Activated naive CD4-positive, alpha-beta T cell treated with anti-CD3 and anti-CD28 coated beads, Interleukin-2, amount 10 ng/mL, durations not matched to agents 7 days and 5 days (primary cell): ENCODE measurements at regions of chr1 and their contacts with region 1.

Region 1: GRCh38 chr1:16078925-16079656 is 5.6 kb upstream of the FAM131C start:
- DNase-seq: peak; percentile 85
- H3K4me3 Mint-ChIP-seq: peak overlapping the region; percentile 50
- H3K27ac Mint-ChIP-seq: peak overlapping the region; percentile 65
- H3K4me1 Mint-ChIP-seq: peaks cover 13% of the 10 kb centered on the region
- H3K27me3 Mint-ChIP-seq: peaks cover 37% of the 10 kb centered on the region

Region 2: DNA sequence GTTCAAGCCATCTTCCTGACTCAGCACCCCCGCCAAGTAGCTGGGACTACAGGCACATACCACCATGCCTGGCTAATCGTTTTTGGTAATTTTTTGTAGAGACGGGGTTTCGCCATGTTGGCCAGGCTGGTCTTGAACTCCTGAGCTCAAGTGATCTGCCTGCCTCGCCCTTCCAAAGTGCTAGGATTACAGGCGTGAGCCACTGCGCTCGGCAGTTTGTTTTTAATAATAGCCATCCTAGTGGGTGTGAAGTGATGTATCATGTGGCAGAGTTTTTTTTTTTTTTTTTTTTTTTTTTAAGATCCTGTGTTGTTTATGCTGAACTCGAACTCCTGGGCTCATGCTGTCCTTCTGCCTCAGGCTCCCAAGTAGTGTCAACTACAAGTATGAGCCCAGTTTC is 179.8 kb before region 1 on chr1:
- CTCF ChIA-PET with region 1: no interaction called
- DNase-seq: no peak
- H3K4me3 Mint-ChIP-seq: no peak overlapping the region
- H3K27ac Mint-ChIP-seq: no peak overlapping the region
- H3K4me1 Mint-ChIP-seq: peaks cover 7% of the 10 kb centered on the region
- H3K27me3 Mint-ChIP-seq: no peaks in the 10 kb centered on the region

Region 3: GRCh38 chr1:15985611-15986297 is 93.3 kb before region 1 on chr1:
- CTCF ChIA-PET with region 1: no interaction called
- DNase-seq: no peak
- H3K4me3 Mint-ChIP-seq: no peak overlapping the region
- H3K27ac Mint-ChIP-seq: no peak overlapping the region
- H3K4me1 Mint-ChIP-seq: no peaks in the 10 kb centered on the region
- H3K27me3 Mint-ChIP-seq: peaks cover 25% of the 10 kb centered on the region

Region 4: DNA sequence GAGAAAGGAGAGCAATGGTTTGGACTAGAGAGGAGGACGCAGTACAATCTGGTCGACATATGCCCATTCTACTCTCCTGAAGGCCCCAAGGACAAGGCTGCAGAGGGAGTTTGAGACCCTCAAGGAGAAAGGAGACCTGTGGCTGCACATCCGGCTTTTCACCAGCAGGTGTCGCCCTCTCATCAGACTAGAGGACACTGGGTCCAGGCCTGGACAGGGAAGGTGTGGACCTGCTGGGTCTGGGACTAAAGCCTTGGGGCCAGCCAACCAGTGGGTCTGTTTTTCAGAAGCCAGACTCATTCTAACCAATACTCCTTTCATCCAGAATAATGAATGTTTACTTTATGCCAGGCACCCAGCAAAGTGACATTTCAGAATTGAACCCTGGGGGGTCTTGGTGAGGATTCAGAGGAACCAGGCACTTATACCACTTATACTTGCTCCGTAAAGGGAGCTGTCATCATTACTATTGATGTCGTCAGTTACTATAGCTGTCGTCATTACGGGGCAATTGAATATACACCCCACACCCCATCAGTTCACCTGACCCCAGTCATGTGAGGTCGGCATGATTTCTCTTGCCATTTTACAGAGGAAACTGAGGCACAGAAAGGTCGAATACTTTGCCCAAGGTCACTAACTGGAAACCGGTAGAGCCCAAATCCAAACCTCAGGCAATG is 69.9 kb before region 1 on chr1:
- CTCF ChIA-PET with region 1: interaction called, 12 read pairs
- DNase-seq: peak; percentile 82
- H3K4me3 Mint-ChIP-seq: no peak overlapping the region
- H3K27ac Mint-ChIP-seq: no peak overlapping the region
- H3K4me1 Mint-ChIP-seq: peaks cover 4% of the 10 kb centered on the region
- H3K27me3 Mint-ChIP-seq: peaks cover 50% of the 10 kb centered on the region

Region 5: DNA sequence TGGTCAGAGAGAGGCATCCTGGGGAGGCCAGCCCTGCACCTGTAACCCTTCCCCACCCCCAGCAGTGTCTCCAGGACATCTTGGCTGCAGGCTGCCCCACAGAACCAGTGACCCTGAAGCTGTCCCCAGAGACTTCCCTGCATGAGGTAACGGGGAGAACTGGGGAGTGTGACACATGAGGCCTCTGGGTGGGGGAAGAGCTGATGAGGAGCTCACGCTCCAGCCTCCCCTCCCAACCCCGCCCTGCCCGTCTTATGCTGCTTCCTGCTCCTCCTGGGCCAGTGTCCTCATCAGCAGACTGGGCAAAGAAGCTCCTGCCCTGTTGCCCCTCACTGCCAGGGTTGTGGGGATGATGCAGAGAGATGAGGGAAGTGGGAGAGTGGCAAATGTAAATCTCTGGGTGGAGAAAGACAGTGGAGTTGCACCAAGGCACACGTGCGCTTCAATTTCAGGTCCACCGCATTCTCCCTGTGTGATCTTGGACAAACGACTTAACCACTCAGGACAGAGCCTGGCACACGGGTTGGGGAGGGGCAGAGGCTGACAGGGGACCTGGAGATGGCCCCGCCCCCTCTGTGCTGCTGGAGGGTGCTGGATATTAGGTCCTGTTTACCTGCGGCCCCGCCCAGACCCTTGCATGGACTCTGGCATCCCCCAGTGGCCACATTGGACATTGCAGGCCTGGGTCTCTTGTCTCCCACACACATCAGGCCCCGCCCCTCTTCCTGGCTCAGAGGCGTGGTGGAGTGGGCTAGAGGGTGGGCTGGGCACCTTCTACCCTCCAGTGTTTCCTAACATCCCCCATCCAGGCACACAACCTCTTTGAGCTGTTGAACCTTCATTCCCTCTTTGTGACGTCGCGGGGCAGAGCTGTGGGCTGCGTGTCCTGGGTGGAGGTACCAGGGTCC is 23.2 kb before region 1 on chr1:
- CTCF ChIA-PET with region 1: no interaction called
- DNase-seq: peak; percentile 92
- H3K4me3 Mint-ChIP-seq: no peak overlapping the region
- H3K27ac Mint-ChIP-seq: no peak overlapping the region
- H3K4me1 Mint-ChIP-seq: peaks cover 6% of the 10 kb centered on the region
- H3K27me3 Mint-ChIP-seq: peaks cover 22% of the 10 kb centered on the region

Region 6: DNA sequence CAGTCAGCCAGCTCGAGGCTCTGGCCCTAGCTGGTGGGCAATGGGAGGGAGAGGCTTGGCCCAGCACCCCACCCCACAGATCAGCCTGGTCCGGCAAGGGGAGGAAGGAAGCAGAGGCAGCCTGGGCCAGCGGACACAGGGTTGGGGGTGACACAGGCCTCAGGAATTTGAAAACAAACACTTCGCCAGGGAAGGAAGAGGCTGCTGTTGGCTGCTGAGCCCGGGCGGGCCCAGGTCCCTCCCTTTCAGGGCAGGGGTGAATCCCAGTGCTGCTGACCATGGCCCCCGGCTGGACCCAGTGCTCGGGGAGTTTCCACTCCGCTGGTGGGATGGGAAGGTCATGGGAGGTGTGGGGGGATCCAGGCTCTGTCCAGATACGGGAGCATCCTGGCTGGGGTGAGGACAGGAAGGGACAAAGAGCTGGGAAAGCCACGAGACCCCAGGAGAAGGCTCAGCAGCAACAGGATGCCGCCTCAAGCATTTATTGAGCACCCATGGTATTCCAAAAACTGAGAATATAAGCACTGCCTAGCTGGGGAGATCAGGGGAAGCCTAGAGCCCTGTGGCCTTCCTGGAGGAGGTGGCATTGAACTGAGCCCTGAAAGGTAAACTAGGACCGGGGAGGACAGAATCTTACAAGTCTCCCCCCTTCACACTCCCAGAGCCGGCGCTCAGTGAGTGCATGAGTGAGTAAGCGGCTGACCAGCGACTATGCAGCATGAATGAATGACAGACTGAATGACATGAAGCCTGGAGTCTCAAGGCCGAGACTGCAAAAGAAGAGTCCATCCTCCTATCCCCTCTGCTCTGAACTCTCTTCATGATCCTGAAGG is 103.0 kb after region 1 on chr1:
- CTCF ChIA-PET with region 1: interaction called, 275 read pairs
- DNase-seq: no peak
- H3K4me3 Mint-ChIP-seq: no peak overlapping the region
- H3K27ac Mint-ChIP-seq: no peak overlapping the region
- H3K4me1 Mint-ChIP-seq: no peaks in the 10 kb centered on the region
- H3K27me3 Mint-ChIP-seq: peaks cover 17% of the 10 kb centered on the region

Region 7: GRCh38 chr1:16204634-16205337 is 125.7 kb after region 1 on chr1:
- CTCF ChIA-PET with region 1: interaction called, 11 read pairs
- DNase-seq: peak; percentile 63
- H3K4me3 Mint-ChIP-seq: peak overlapping the region; percentile 63
- H3K27ac Mint-ChIP-seq: no peak overlapping the region
- H3K4me1 Mint-ChIP-seq: peaks cover 19% of the 10 kb centered on the region
- H3K27me3 Mint-ChIP-seq: no peaks in the 10 kb centered on the region

Region 8: DNA sequence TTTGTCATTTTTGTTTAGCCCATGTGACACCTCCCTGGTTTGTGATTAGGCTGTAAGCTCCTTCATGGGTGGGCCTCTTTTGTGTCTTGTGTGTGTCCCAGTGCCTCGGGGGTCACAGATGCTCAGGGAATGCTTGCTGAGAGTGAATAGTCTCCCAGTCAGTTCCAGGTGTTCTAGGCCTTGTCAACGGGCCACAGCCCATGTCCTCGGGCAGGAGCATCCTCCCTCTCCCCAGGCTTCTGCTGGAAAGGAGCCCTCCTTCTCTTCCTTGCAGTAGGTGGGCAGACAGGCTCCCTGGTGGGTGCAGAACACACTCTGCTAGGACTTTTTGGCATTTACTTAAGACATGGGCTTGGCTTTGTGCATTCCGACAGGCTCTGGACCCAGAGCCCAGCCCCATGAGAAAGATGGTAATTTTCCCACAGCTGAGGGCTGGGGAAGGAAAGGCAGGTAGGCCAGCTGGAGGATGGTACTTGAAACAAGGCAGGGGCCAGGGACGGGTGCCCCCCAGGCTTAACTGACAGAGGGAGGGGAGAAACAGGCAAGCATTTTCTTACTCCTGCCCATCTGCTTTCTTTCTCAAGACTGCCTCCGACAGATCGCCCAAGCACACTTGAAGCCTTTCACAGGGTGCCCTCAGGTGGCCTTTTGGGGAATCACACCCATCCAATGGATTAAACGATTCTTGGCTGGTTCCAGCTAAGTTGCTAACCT is 165.0 kb after region 1 on chr1:
- CTCF ChIA-PET with region 1: interaction called, 53 read pairs
- DNase-seq: peak; percentile 86
- H3K4me3 Mint-ChIP-seq: no peak overlapping the region
- H3K27ac Mint-ChIP-seq: no peak overlapping the region
- H3K4me1 Mint-ChIP-seq: peaks cover 19% of the 10 kb centered on the region
- H3K27me3 Mint-ChIP-seq: no peaks in the 10 kb centered on the region